ENCODE measurements at regions of chr12 and their contacts with region 1.

Region 1: GRCh38 chr12:94149119-94149780 is 873 bp downstream of the PLXNC1 start:
- DNase-seq: peak; percentile 62
- ATAC-seq: peak; percentile 28
- H3K4me3 Mint-ChIP-seq: peak overlapping the region; percentile 77
- H3K27ac Mint-ChIP-seq: peak overlapping the region; percentile 25
- H3K4me1 Mint-ChIP-seq: peaks cover 17% of the 10 kb centered on the region
- H3K27me3 Mint-ChIP-seq: peaks cover 24% of the 10 kb centered on the region

Region 2: DNA sequence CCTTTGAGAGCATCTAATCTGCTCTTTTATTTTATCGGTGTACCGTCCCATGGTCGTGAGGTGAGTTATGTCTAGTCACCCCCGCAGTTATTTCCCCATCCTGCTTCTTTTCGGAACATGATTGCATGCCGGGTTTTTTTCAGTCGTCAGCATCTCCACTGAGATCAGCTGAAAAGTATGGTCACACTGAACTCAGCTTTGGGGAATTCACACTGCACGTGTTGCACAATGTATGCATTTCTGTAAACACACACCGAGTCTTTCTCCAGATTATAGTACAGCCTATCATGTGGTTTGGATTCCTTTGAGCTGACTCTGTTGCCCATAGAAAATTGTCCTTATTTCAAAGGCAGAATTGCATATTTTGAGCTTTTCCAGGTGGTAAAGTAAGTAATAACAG is 23.7 kb after region 1 on chr12:
- CTCF ChIA-PET with region 1: interaction called, 4 read pairs
- POLR2A ChIA-PET with region 1: no interaction called
- intact Hi-C with region 1: loop called in 1 of 2 experiments (anchors 2 kb)
- DNase-seq: no peak
- ATAC-seq: no peak
- H3K4me3 Mint-ChIP-seq: no peak overlapping the region
- H3K27ac Mint-ChIP-seq: no peak overlapping the region
- H3K4me1 Mint-ChIP-seq: peaks cover 73% of the 10 kb centered on the region
- H3K27me3 Mint-ChIP-seq: no peaks in the 10 kb centered on the region

Region 3: DNA sequence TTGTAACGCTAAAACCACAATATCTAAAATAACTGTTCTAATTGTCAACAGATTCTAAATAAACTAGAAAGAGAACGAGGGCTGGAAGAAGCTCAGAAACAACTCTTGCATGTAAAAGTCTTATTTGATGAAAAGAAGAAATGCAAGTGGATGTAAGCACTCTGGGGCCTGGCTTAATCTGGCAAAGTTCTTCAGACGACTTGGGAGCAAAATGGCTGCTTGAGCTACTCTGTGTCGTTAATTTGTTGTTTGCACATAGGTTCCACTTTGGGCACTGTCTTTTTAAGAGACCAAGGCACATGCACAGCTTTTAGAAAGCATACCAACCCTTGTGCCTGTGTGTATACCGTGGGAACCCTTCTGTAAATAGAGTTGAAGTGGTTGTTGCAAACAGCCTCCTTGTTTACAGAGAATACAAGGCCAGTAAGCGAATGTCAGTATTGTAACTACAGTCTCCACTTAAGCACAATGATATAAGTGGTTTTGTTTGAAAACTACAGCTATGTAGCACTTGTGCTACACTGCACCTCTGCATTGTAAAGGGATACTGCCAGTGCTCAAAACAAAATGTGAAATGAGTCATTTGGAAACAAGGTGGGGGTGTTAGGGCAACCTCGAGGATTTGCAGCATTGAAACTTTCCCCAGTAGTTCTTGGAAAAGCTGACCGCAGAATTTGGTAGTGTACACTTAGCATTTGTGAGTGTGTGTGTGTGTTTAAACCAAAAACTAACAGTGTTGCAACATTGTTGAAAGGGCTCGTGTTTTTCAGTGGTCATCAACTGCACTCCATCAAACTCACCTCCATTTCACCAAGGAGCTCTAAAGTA is 156.1 kb after region 1 on chr12:
- CTCF ChIA-PET with region 1: no interaction called
- POLR2A ChIA-PET with region 1: no interaction called
- intact Hi-C with region 1: loop called (anchors 2 to 10 kb)
- DNase-seq: peak; percentile 68
- ATAC-seq: peak; percentile 93
- H3K4me3 Mint-ChIP-seq: peak overlapping the region; percentile 5
- H3K27ac Mint-ChIP-seq: peak overlapping the region; percentile 70
- H3K4me1 Mint-ChIP-seq: peaks cover 30% of the 10 kb centered on the region
- H3K27me3 Mint-ChIP-seq: no peaks in the 10 kb centered on the region

Region 4: GRCh38 chr12:94435511-94435927 is 286.3 kb after region 1 on chr12:
- CTCF ChIA-PET with region 1: interaction called, 6 read pairs
- POLR2A ChIA-PET with region 1: no interaction called
- intact Hi-C with region 1: loop called (anchors 2 to 5 kb)
- DNase-seq: no peak
- ATAC-seq: peak; percentile 19
- H3K4me3 Mint-ChIP-seq: no peak overlapping the region
- H3K27ac Mint-ChIP-seq: no peak overlapping the region
- H3K4me1 Mint-ChIP-seq: peaks cover 26% of the 10 kb centered on the region
- H3K27me3 Mint-ChIP-seq: no peaks in the 10 kb centered on the region

Region 5: DNA sequence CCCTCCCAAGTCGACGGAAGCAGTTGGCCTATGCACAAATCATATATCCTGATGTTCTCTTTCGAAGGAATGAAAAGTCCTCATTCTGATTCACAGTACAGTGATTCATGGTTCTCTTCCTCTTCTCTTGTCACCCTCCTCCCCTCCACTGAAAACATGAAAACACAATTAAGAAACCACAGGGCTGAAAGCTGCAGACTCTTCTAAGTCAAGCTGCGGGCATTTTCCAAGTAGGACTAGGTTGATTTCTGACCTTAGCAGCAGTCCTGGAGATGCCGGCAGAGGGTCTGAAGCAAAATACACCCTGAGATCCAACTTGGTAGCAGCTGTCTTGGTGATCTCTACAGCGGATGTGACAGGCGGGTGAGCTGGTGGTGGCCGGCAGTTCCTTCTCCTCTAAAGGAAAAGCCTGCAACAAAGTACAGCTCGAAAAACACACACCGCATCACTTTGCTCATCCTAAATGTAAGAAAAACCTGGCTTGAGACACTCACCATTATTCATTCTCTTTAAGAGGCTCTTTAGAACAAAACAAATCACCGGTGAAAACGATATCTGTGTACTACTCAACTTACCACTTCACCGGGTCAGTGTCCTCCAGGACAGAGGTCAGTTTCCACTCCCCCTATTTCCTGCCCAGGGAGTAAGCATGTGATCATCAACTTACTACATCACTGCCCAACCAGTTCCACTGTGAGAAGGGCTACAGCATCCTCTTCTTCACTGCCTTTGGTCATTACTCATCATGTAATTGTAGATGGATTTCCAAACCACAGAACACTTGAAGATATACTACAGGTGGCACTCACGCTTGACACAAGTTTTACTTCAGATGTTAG is 495.1 kb after region 1 on chr12:
- CTCF ChIA-PET with region 1: no interaction called
- POLR2A ChIA-PET with region 1: no interaction called
- intact Hi-C with region 1: loop called in 1 of 2 experiments (anchors 5 kb)
- DNase-seq: peak; percentile 41
- ATAC-seq: peak; percentile 61
- H3K4me3 Mint-ChIP-seq: no peak overlapping the region
- H3K27ac Mint-ChIP-seq: no peak overlapping the region
- H3K4me1 Mint-ChIP-seq: peaks cover 37% of the 10 kb centered on the region
- H3K27me3 Mint-ChIP-seq: peaks cover 48% of the 10 kb centered on the region